Sigmoid colon (tissue), 7 donors: ENCODE measurements at regions of chr5 and their contacts with region 1.

Region 1: DNA sequence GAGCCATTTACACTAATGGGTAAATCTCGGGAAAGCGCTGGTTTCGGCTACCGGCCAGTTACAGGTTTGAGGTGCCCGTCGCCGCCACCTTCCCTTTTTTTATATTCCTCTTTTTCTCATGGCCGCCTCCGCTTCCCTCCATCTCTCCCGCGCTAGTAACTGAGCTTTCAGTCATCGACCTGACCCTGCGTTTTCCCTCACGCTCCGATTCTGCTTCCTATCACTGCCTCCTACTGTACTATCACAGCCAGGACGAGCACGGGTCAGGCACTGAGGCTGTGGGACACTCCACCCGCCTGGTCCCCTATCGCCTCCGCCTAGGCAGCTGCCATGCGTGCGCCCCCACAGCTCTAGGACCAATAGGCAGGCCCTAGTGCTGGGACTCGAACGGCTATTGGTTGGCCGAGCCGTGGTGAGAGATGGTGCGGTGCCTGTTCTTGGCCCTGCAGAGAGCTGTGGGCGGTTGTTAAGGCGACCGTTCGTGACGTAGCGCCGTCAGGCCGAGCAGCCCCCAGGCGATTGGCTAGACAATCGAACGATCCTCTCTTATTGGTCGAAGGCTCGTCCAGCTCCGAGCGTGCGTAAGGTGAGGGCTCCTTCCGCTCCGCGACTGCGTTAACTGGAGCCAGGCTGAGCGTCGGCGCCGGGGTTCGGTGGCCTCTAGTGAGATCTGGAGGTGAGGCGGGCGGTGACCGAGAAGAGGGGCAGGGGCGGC is at the start of gene HMGCR:
- DNase-seq: peak; percentile 99
- H3K4me3 ChIP-seq: peak within 1 kb of the TSS; percentile 80 to 95 (median 88)
- H3K27ac ChIP-seq: peak within 1 kb of the TSS; percentile 90 to 98 (median 96)
- H3K4me1 ChIP-seq: peaks cover 0 to 19% (median 14%) of the 10 kb centered on the region in 4 donors
- H3K27me3 ChIP-seq: no peaks in the 10 kb centered on the region
- CTCF ChIP-seq: peak in 1 of 4 experiments; percentile 6
- EP300 ChIP-seq: no peak
- POLR2A ChIP-seq: peak; percentile 73 to 78
- total RNA-seq, gene HMGCR: 9.7 to 16.1 (median 12.2) TPM

Region 2: GRCh38 chr5:75202935-75203334 is 133.8 kb before region 1 on chr5:
- intact Hi-C with region 1: no loop called
- DNase-seq: no peak
- H3K4me3 ChIP-seq: no peak overlapping the region
- H3K27ac ChIP-seq: no peak overlapping the region
- H3K4me1 ChIP-seq: no peaks in the 10 kb centered on the region
- H3K27me3 ChIP-seq: no peaks in the 10 kb centered on the region
- CTCF ChIP-seq: no peak
- EP300 ChIP-seq: no peak
- POLR2A ChIP-seq: no peak

Region 3: DNA sequence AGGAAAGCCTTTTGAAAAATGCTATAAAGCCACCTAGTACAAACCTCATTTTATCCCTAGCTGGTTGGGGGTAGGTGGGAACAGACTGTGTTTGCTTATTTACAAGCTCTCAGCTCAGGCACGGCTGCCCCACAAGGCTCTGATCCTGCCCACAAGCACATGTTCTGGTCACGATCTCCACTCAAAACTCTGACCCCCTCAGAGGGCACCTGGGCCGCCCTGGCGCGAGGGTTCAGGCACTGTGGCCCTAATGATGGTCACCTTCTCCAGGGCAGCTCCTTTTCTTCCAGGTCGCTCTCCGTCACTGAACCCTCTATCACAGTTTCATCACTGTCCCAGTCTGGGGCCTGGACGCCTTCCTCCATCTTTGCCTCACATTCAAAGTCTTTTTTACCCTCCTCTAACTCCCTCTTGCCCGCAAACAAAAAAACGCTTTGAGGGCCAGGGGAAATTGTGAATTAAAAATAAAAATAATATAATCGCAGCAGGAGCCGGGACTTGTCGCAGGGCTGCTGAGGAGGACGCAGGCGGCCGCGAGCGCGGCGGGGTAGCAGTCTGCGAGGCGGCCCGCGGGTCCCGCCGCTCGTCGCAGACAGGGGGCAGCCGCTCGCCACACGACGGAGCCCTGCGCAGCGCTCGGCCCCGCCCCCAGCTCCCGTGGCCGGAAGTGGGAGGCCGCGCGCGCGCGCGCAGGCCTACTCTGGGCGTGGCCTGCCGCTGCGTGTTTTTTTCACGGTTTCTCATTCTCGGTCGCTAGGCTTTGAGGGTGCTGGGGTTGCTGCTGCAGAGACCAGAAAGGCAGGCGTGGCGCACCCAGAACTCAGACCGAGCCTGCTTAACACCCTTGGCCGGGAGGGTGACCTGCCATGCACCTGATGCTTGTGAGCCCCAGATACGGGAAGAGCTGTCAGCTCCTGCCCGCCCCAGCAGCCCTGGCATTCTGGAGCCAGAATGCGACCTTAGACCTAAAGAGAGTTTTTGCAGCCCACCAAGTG is 100.2 kb before region 1 on chr5 and contains the start of gene ANKRD31:
- intact Hi-C with region 1: loop called (anchors 1 kb)
- DNase-seq: peak; percentile 90
- H3K4me3 ChIP-seq: peak within 1 kb of the TSS; percentile 53 to 71 (median 60)
- H3K27ac ChIP-seq: peak within 1 kb of the TSS; percentile 71 to 79 (median 78)
- H3K4me1 ChIP-seq: peaks cover 0 to 9% (median 3%) of the 10 kb centered on the region in 4 donors
- H3K27me3 ChIP-seq: no peaks in the 10 kb centered on the region
- CTCF ChIP-seq: peak in 3 of 4 experiments; percentile 41 to 92 (median 50)
- EP300 ChIP-seq: no peak
- POLR2A ChIP-seq: peak in 1 of 2 donors; percentile 12
- total RNA-seq, gene ANKRD31: under 0.01 to 0.33 (median 0.28) TPM in 3 of 4 donors, not detected in the other

Region 4: DNA sequence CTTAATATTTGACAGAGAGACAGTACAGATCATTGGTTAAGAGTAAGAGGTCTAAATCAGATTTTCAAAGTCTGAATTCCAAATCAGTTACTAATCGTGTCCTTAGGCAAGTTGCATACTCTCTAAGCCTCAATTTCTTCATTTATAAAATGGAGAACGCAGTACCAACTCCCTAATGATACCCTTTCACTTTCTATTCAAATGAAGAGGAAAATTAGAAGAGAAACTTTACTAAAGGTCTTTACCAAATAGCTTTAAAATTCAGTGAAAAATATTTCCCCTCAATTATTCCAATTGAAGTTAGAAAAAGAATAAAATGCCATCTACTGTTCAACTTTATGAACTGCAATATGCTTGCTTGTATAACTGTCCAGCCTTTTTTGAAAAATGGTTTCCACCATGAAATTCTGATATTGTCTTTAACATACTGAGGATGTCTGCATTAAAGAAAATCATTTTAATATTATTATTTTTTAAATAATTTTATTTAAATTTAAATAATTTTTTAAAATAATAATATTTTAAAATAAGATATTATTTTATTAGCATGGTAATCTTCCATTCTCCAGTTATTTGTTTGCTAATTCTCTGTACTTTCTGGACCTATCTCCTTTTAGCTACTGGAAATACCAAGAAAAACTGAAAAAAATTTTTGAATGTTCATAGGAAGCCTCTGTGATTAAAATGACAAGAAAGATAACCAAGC is 344.5 kb after region 1 on chr5:
- intact Hi-C with region 1: loop called (anchors 5 kb)
- DNase-seq: no peak
- H3K4me3 ChIP-seq: no peak overlapping the region
- H3K27ac ChIP-seq: peak overlapping the region in 3 of 4 donors; percentile 20 to 45 (median 23)
- H3K4me1 ChIP-seq: peaks cover 0 to 19% (median 6%) of the 10 kb centered on the region in 4 donors
- H3K27me3 ChIP-seq: no peaks in the 10 kb centered on the region
- CTCF ChIP-seq: peak; percentile 13 to 75 (median 59)
- EP300 ChIP-seq: no peak
- POLR2A ChIP-seq: no peak

Region 5: DNA sequence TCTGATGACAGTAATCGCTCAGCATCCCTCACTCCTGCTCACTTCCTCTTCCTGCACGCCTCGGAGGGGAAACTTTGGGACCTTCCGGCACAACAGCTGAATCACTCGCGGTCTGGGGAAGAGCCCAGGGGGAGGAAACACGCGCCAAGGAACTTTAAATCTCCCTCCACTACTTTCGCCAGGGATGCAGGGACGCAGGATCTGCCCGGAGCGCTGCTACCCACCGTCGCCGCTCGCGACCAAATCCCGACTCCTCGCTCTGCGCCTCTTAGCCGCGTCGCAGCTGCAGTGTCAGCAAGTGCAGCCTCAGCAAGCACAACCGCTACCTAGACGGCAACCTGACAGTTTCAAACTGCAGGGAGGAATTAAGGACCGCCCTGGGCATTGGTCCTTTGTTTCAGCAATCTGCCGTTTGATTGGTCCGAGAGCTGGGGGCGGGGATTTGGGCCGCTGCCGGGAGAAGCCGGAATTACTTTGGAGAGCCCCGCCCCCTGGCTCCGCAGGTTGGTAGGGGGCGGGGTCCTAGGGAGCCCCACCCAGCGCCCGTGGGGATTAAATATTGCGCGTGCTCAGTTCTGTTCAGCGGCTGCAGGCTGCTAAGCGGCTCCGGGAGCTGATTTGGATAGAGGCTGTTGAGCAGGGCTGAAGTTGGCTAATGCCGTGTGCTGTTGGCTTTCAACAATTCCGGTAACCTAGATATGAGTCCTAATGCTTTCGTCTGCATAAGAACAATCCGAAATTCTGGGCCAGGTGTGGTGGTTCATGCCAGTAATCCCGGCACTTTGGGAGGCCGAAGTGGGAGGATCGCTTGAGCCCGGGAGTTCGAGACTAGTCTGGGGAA is 380.5 kb after region 1 on chr5 and contains the start of gene POC5:
- intact Hi-C with region 1: loop called (anchors 5 kb)
- DNase-seq: peak; percentile 98
- H3K4me3 ChIP-seq: peak within 1 kb of the TSS; percentile 55 to 91 (median 75)
- H3K27ac ChIP-seq: peak within 1 kb of the TSS; percentile 79 to 90 (median 88)
- H3K4me1 ChIP-seq: peaks cover 0 to 14% (median 11%) of the 10 kb centered on the region in 4 donors
- H3K27me3 ChIP-seq: no peaks in the 10 kb centered on the region
- CTCF ChIP-seq: no peak
- EP300 ChIP-seq: no peak
- POLR2A ChIP-seq: peak; percentile 23 to 28
- total RNA-seq, gene POC5: 7.1 to 16.6 (median 9.7) TPM